Adrenal gland (tissue), 19 donors: ENCODE measurements at regions of chr2 and their contacts with region 1.

Region 1: DNA sequence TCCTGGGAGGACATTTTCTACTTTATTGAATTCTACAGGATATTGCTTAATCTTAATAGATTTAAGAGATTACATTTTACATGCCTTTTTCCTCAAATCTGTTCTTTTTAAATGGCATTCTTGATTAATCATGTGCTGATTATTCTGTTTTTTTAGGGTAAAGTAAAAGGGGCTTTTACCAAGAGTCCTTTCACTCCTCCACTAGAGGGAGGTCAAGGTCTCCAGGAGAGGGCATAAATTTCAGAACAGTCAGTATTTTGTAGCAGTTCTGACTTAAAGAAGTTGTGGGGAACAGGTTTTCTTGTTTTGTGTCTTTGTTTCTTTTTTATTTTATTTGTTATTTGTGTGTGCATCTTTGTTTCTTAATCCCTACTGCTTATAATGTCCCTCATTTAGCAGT is 25.4 kb downstream of the WDR75 start:
- DNase-seq: peak in 2 of 7 donors; percentile 7 to 19
- H3K4me3 ChIP-seq: no peak overlapping the region
- H3K27ac ChIP-seq: no peak overlapping the region
- H3K4me1 ChIP-seq: peaks cover 26 to 40% of the 10 kb centered on the region in 2 donors
- H3K27me3 ChIP-seq: no peaks in the 10 kb centered on the region
- CTCF ChIP-seq: peak; percentile 25 to 74 (median 63)
- POLR2A ChIP-seq: no peak

Region 2: DNA sequence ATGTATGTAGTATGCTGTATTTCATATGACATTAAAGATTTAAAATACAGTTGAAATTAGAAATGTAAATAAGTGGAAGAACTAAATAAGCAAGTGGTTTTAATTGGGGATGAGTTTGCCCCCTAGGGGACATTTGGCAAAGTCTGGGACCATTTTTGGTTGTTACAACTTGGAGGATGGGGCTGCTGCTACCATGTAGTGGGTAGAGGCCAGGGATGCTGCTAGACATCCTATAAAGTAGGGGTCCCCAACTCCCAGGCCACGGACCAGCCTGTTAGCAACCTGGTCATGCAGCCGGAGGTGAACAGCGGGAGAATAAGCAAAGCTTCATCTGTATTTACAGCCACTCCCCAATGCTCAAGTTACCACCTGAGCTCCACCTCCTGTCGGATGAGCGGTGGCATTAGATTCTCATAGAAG is 166.7 kb after region 1 on chr2:
- intact Hi-C with region 1: loop called (anchors 5 to 10 kb)
- DNase-seq: peak in 5 of 7 donors; percentile 27 to 44 (median 37)
- H3K4me3 ChIP-seq: no peak overlapping the region
- H3K27ac ChIP-seq: no peak overlapping the region
- H3K4me1 ChIP-seq: peaks cover 0 to 5% of the 10 kb centered on the region in 2 donors
- H3K27me3 ChIP-seq: no peaks in the 10 kb centered on the region
- CTCF ChIP-seq: peak; percentile 31 to 59 (median 48)
- POLR2A ChIP-seq: no peak